ENCODE measurements at regions of chr3 and their contacts with region 1.

Region 1: DNA sequence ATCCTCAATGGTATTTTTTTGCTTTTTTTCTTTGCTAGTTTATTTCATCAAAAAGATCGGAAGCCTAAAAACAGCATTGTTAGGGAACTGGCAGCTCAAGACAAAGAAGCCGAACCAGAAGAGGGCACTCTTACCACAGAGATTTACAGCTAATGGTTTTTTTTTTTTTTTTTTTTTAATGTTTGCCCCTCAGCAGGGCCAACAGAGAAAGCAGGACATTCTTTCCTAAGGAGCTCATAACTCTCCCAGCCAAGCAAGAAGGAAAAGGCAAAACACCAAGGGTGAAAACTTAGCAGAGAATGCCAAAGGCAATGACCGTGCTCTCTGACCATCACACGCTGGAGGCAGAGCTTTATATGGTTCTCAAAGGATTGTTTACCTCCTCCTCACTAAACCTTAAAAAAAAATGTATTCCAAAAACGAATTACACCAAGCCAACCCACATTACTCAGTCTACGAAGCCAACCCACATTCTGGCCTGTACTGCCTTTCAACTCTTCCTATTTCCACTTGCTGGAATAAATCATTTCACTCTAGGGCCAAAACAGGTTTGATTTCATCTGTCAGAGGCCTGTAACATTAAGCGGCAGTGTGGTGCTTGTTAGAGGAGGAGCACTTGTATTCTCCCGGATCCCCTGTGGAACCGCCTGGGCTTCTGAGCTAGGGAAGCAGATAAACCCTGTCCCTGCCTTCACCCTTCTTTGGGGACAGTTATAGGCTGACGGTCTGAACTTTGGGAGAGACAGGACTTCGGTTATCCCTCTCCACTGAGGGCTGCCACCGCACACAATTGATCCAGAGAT is 35.6 kb upstream of the GYG1 start:
- DNase-seq: peak; percentile 68
- ATAC-seq: peak; percentile 53
- H3K4me3 ChIP-seq: peak overlapping the region; percentile 29; the same call in 1 of the 2 replicates
- H3K27ac ChIP-seq: no peak overlapping the region
- H3K4me1 ChIP-seq: peaks cover 17% of the 10 kb centered on the region
- H3K27me3 ChIP-seq: no peaks in the 10 kb centered on the region
- CTCF ChIP-seq: peak; percentile 87

Region 2: GRCh38 chr3:148439254-148439822 is 516.4 kb before region 1 on chr3:
- CTCF ChIA-PET with region 1: interaction called, 33 read pairs
- POLR2A ChIA-PET with region 1: no interaction called
- intact Hi-C with region 1: no loop called
- DNase-seq: no peak
- ATAC-seq: no peak
- H3K4me3 ChIP-seq: no peak overlapping the region
- H3K27ac ChIP-seq: no peak overlapping the region
- H3K4me1 ChIP-seq: no peaks in the 10 kb centered on the region
- H3K27me3 ChIP-seq: peaks cover 1% of the 10 kb centered on the region; the same call in 1 of the 2 replicates
- CTCF ChIP-seq: no peak

Region 3: DNA sequence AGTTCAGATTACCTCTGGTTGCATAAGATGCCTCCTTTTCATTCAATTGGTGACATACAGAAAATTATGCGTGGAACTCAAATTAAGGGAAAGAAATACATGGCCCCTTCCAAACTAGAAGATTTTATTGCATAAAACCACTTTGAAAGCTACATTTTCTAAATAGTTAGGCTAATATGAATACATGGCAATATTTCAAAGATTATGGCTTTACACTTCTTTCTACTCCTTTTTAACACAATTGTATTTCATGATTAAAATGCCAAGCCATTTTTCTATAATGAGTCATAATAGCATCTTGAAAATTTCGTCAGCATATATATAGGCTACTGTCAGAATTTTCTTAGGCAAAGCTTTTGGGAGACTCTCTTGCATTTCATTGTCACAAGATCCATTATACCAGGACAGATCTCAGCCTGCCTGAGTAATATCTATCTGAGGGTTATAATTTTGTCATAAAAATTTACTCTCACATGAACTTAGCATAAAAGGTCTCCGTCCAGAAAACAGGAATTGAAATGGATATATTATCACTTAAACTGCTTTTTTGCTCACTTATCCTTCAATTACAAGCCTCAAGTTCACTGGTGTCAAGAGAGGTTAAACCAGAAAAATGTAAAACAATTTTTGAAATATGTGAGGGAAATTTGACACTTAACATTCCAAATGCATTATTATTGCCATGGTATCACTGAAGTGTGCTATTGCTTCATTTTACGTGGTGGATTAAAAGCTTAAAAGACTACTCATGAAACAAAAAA is 53.5 kb before region 1 on chr3:
- CTCF ChIA-PET with region 1: no interaction called
- POLR2A ChIA-PET with region 1: no interaction called
- intact Hi-C with region 1: no loop called
- DNase-seq: peak; percentile 39
- ATAC-seq: no peak
- H3K4me3 ChIP-seq: no peak overlapping the region
- H3K27ac ChIP-seq: no peak overlapping the region
- H3K4me1 ChIP-seq: 0 out of 2 replicates have a peak, but pooled peaks cover 9% of the 10 kb centered on the region
- H3K27me3 ChIP-seq: peaks cover 20% of the 10 kb centered on the region
- CTCF ChIP-seq: no peak

Region 4: DNA sequence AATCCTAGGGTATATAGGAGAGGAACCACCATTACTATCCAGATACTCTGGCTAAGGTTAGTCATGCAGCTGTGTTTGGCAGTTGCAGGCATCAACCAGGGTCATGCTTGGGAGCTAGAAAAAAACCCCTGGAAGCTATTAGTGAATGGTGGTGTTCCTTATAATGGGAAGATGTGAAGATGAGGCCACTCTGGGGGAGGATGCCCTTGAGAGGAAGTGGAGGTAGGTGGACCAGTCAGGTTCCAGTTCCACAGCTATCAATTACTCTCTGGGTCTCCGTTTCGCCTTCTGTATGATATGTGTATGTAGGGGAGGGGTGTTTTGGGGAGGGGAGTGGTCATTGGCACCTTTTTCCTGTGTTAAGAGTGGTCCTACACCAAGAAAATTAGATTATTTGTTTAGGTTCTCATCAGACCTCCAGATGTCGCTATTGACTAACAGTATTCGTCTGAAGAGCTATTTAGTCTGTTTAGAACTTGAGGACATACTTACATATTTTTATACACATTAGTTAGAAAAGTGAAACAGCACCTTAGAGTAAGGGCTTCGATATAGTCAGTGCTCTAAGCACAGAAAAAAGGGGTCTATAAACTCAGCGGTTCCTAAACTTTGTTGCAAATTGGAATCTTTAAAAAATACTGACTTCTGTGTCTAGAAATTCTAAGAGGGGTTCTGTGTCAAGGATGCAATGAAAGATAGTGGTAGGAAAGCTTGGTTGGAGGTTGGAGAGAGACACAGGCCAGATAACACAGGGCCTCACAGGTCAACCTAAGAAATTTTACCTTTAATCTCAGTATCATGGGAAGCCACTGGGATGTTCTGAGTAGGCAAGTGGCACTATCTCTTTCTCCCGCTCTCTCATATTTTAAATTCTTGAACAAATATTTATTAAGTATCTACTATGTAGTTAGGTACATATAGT is 164.6 kb after region 1 on chr3:
- CTCF ChIA-PET with region 1: interaction called, 25 read pairs
- POLR2A ChIA-PET with region 1: no interaction called
- intact Hi-C with region 1: loop called (anchors 1 kb)
- DNase-seq: peak; percentile 86
- ATAC-seq: peak; percentile 82
- H3K4me3 ChIP-seq: no peak overlapping the region
- H3K27ac ChIP-seq: no peak overlapping the region
- H3K4me1 ChIP-seq: 0 out of 2 replicates have a peak, but pooled peaks cover 4% of the 10 kb centered on the region
- H3K27me3 ChIP-seq: no peaks in the 10 kb centered on the region
- CTCF ChIP-seq: peak; percentile 83

Region 5: DNA sequence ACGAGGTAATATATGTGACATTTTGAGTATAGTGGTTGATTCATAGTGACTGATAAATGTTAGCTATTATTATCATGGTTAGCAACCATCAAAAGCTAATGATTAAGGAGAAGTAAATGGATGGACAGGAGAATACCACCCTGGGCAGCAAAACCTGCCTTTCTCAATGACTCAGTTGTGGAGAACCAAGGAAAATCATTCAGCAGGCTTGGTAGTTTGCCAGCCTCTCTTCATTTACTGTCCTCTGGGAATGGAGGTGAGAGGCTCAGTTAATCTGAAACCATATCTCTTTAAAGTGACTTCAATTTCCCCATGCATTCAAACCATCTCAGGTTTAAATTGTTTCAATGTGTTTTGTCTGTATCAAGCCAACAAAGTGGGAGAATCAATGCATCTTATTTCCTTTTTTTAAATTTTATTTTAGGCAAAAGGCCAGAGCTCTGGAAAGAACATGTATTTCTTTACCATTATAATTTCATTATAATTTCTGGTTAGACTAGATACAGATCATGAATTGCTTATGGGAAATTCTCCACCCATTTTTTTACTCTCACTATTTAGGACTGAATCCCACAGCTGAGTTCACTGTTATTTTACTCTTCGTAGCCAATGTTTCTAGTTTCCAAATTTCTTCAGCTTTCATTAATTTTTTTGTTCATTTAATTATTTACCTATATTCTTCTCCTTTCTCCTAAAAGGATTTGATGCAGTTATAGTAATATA is 375.0 kb after region 1 on chr3:
- CTCF ChIA-PET with region 1: interaction called, 6 read pairs
- POLR2A ChIA-PET with region 1: no interaction called
- intact Hi-C with region 1: loop called (anchors 1 kb)
- DNase-seq: peak; percentile 79
- ATAC-seq: peak; percentile 36; the same call in 1 of the 2 replicates
- H3K4me3 ChIP-seq: no peak overlapping the region
- H3K27ac ChIP-seq: peak overlapping the region; percentile 6; the same call in 1 of the 2 replicates
- H3K4me1 ChIP-seq: peaks cover 41% of the 10 kb centered on the region
- H3K27me3 ChIP-seq: no peaks in the 10 kb centered on the region
- CTCF ChIP-seq: no peak

Region 6: GRCh38 chr3:149366941-149367840 is 411.4 kb after region 1 on chr3:
- CTCF ChIA-PET with region 1: interaction called, 15 read pairs
- POLR2A ChIA-PET with region 1: no interaction called
- intact Hi-C with region 1: no loop called
- DNase-seq: peak; percentile 99
- ATAC-seq: peak; percentile 77
- H3K4me3 ChIP-seq: 0 out of 2 replicates have a peak overlapping the region, but pooled peaks have one; percentile 27
- H3K27ac ChIP-seq: peak overlapping the region; percentile 99
- H3K4me1 ChIP-seq: peaks cover 66% of the 10 kb centered on the region
- H3K27me3 ChIP-seq: no peaks in the 10 kb centered on the region
- CTCF ChIP-seq: no peak